Activated T-helper 1 cell treated with anti-CD3 and anti-CD28 coated beads, Interleukin-12 subunit alpha, Interleukin-12 subunit beta, Interleukin-2, Interleukin-4 antibody, amounts not matched to agents 30 ng/mL and 10 ng/mL and 1 ng/mL, durations not matched to agents 14 hours and 24 hours and 36 hours (primary cell): ENCODE measurements at regions of chr18 and their contacts with region 1.

Region 1: DNA sequence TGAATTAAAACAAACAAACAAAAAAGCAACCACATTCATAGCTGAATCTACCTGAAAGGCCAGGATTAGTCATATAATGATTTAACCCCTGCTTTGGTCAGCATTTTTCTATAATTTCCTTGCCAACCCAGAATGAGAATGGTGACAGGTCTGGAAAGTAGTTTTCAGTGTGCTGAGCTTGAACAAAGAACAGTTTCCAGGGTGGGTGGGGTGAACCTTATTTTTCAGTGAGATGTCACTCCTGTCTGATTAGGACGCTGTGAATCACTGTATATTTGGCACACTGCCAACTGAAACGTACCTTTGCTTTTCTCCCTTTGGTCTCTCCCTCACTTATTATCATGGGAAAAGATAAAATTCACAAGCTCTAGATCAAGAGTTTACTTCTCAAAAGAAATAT is 35.0 kb upstream of the DSC1 start:
- DNase-seq: no peak
- H3K4me3 Mint-ChIP-seq: no peak overlapping the region
- H3K27ac Mint-ChIP-seq: no peak overlapping the region
- H3K4me1 Mint-ChIP-seq: no peaks in the 10 kb centered on the region
- H3K27me3 Mint-ChIP-seq: no peaks in the 10 kb centered on the region

Region 2: DNA sequence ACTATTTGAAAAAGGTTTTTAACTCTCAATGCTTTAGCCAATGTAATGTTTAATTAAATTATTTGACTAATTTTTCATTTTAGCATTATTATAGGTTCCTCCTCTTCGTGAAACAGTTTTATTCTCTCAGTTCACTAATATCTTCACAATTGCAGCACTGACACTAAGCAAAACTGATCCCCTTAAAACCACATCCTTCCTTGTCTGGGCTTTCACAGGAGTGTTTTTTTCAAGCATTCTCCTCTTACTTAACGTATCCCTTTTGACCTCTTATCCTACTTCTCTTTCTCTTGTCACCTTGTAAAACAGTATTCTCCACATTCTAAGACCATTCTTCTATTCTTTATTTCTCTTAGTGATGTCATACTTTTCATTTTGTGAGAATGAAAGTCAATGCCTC is 268.0 kb before region 1 on chr18:
- intact Hi-C with region 1: no loop called
- DNase-seq: no peak
- H3K4me3 Mint-ChIP-seq: no peak overlapping the region
- H3K27ac Mint-ChIP-seq: no peak overlapping the region
- H3K4me1 Mint-ChIP-seq: no peaks in the 10 kb centered on the region
- H3K27me3 Mint-ChIP-seq: no peaks in the 10 kb centered on the region

Region 3: DNA sequence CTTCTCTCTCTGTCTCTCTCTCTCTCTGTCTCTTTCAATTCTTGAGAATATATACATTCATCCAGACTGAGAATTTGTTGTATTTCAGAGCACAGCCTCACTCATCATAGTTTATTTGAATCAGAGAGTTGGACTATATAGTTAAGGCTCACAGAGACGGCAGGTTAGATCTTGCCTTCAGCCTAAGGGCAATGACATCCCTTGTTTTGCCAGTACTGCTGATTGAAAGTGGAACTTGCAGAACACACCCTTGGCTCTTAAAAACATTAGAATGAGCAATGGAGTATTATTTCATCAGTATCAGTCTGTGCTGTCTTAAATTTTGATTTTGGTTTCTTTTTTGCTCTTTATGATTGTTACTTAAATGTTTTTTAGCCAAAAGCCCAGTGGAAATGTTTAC is 58.3 kb after region 1 on chr18:
- intact Hi-C with region 1: loop called (anchors 10 kb)
- DNase-seq: no peak
- H3K4me3 Mint-ChIP-seq: no peak overlapping the region
- H3K27ac Mint-ChIP-seq: no peak overlapping the region
- H3K4me1 Mint-ChIP-seq: no peaks in the 10 kb centered on the region
- H3K27me3 Mint-ChIP-seq: no peaks in the 10 kb centered on the region

Region 4: DNA sequence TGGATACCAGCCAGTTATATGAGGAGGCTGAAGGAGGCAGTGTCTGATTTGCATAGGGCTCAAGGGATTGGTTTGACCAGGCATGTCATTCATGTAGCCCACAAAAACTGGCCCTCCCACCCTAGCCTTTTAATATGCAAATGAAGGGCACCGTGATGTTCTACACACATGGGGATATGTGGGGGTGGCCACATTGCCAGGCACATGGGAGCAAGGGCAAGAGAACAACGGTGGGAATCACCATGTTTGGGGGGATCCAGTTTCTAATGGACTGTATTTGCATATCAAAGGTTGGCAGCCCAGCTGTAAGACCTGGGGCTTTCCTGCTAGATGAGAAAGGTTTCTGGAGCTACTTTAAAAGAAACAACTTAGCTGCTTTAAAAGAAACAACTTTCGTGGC is 628.1 kb after region 1 on chr18:
- intact Hi-C with region 1: no loop called
- DNase-seq: no peak
- H3K4me3 Mint-ChIP-seq: no peak overlapping the region
- H3K27ac Mint-ChIP-seq: no peak overlapping the region
- H3K4me1 Mint-ChIP-seq: no peaks in the 10 kb centered on the region
- H3K27me3 Mint-ChIP-seq: no peaks in the 10 kb centered on the region